Activated CD4-positive, alpha-beta T cell treated with anti-CD3 and anti-CD28 coated beads for 36 hours (primary cell): ENCODE measurements at regions of chr9 and their contacts with region 1.

Region 1: DNA sequence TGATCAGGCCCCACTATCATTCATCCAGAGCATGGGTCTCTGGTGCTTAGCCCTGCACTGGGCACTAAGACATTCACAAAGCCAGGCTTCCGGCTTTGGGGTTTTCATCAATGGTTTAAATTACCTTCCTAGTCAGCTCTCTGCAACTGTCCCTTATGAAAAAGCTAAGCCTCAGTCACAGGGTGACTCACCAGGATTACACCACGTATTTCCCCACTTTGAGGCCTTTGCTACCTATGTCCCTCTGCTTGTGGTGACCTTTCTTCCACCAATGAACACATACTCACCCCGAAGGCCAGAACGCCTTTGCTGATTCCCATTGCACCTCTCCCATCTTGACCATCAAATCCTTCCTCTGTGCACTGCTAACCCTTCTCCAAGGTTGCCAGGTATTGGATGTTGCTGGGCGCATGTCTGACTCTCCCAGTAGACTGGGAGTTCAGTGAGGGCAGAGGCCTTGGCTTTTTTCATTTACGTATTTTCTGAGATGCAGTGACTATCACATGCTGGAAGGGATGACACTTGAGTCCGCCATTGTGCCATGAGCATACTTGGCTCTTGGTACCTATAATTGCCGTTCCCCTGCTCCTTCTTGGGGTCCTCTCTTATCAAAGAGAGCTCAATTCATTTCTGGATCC is 58.7 kb upstream of the TNFSF8 start:
- DNase-seq: peak; percentile 64
- ATAC-seq: peak; percentile 63
- H3K4me3 Mint-ChIP-seq: peak overlapping the region; percentile 19
- H3K27ac Mint-ChIP-seq: peak overlapping the region; percentile 95
- H3K4me1 Mint-ChIP-seq: peaks cover 68% of the 10 kb centered on the region
- H3K27me3 Mint-ChIP-seq: no peaks in the 10 kb centered on the region

Region 2: DNA sequence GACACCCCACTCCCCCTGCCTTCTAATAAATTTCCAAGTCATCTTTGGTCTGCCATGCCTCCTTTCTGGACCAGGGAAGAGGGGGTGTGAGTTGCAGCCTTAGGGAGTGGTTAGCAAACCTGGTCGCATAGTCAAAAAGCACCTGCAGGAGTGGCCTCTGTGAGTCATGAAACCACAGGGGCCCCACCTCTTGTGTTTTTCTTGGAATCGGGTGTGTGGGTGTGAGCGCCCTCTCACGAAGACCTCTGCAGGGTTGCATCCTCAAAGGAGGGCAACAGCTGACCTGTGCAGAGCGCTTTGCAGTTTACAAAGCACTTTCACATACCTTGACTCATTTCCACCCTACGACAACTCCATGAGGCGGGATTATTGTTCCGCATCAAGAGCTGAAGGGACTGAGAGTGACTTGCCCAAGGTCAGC is 270.3 kb before region 1 on chr9:
- CTCF ChIA-PET with region 1: no interaction called
- POLR2A ChIA-PET with region 1: interaction called, 8 read pairs
- intact Hi-C with region 1: loop called (anchors 1 kb)
- DNase-seq: peak; percentile 95
- ATAC-seq: peak; percentile 94
- H3K4me3 Mint-ChIP-seq: peak overlapping the region; percentile 15
- H3K27ac Mint-ChIP-seq: peak overlapping the region; percentile 96
- H3K4me1 Mint-ChIP-seq: peaks cover 56% of the 10 kb centered on the region
- H3K27me3 Mint-ChIP-seq: peaks cover 2% of the 10 kb centered on the region

Region 3: DNA sequence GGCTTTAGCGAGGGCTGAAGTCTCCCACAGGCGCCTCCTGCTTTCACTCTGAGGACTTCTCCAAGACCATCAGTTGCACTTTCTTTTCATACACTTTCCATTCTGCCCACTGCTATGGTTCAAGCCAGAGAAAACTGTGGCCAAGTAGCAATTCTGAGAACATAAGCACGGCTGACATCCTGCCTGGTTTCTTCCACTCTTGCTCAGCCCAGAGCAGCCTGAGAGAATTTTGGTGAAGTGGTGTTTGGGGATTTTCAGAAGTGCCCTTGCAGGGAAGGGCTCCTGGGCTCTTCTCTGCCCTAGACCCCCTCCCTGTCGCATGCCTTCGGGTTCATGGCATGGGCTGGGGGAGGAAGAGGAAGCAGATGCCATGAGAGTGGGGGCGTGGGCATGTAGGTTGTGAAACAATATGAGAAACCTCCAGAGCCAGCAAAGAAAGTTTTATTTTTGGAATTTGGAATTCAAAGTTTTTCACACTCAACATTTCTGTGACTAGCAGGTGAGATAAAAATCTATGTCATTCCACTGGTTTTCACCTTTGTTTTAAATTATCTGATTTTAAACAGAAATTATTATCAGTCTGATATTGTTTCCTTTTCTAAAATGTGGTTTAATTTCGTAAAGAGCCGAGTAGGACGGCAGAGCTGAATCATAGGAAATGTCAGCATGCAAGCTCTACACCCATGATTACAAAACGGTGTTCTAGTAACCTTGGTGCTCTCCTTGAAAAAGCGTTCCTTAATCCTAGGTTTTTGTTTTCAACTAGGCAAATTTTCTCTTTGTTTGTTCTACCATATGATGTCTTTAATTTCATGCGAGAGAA is 30.8 kb before region 1 on chr9:
- CTCF ChIA-PET with region 1: interaction called, 13 read pairs
- POLR2A ChIA-PET with region 1: interaction called, 16 read pairs
- intact Hi-C with region 1: loop called (anchors 1 kb)
- DNase-seq: peak; percentile 68
- ATAC-seq: peak; percentile 83
- H3K4me3 Mint-ChIP-seq: peak overlapping the region; percentile 68
- H3K27ac Mint-ChIP-seq: peak overlapping the region; percentile 96
- H3K4me1 Mint-ChIP-seq: peaks cover 56% of the 10 kb centered on the region
- H3K27me3 Mint-ChIP-seq: no peaks in the 10 kb centered on the region

Region 4: GRCh38 chr9:115008536-115009270 is 19.6 kb after region 1 on chr9:
- CTCF ChIA-PET with region 1: interaction called, 18 read pairs
- POLR2A ChIA-PET with region 1: interaction called, 30 read pairs
- intact Hi-C with region 1: loop called (anchors 1 kb)
- DNase-seq: peak; percentile 62
- ATAC-seq: peak; percentile 45
- H3K4me3 Mint-ChIP-seq: no peak overlapping the region
- H3K27ac Mint-ChIP-seq: peak overlapping the region; percentile 11
- H3K4me1 Mint-ChIP-seq: peaks cover 85% of the 10 kb centered on the region
- H3K27me3 Mint-ChIP-seq: no peaks in the 10 kb centered on the region